ENCODE measurements at regions of chr2 and their contacts with region 1.

Region 1: DNA sequence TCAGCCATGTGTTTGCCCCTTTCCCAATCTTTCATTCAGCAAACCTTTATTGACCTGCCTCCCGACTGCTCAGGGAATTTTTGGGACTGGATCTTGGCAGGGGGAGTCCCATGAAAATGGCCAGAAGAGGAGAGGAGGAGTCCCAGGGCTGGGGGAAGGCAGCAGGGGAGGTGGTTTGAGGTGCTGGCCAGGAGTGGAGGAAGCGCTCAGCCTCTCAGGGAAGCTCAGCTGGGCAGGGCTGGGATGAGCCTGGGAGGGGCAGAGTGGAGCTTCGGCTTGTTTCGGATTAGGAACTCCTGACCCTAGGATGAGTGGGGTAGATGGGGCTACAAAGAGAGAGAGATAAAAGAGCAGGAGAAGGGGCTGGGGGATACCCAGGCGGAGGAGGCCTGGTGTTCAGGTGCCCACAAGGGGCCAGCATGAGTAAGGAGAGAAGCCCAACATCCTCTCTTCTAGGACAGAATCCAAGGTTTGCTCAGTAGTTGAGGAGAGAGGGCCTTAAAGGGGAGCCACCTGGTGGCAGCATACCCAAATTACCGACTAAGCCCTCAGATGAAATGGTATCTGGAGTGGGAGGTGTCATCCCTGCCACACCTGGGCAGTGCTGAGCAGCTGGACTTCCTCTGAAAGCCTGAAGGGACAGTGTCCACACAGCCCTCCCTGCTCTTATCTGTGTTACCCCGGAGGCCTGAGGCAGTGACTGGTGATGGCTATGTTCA is 91.1 kb downstream of the INHBB start:
- DNase-seq: peak; percentile 59
- ATAC-seq: peak; percentile 51
- H3K4me3 Mint-ChIP-seq: no peak overlapping the region
- H3K27ac Mint-ChIP-seq: no peak overlapping the region
- H3K4me1 Mint-ChIP-seq: no peaks in the 10 kb centered on the region
- H3K27me3 Mint-ChIP-seq: peaks cover 14% of the 10 kb centered on the region
- CTCF ChIP-seq: peak; percentile 33

Region 2: GRCh38 chr2:120343433-120344105 is 93.5 kb before region 1 on chr2:
- CTCF ChIA-PET with region 1: interaction called, 12 read pairs
- POLR2A ChIA-PET with region 1: no interaction called
- intact Hi-C with region 1: loop called (anchors 10 kb)
- DNase-seq: peak; percentile 74
- ATAC-seq: peak; percentile 76
- H3K4me3 Mint-ChIP-seq: no peak overlapping the region
- H3K27ac Mint-ChIP-seq: no peak overlapping the region
- H3K4me1 Mint-ChIP-seq: peaks cover 16% of the 10 kb centered on the region
- H3K27me3 Mint-ChIP-seq: peaks cover 52% of the 10 kb centered on the region
- CTCF ChIP-seq: peak; percentile 75

Region 3: DNA sequence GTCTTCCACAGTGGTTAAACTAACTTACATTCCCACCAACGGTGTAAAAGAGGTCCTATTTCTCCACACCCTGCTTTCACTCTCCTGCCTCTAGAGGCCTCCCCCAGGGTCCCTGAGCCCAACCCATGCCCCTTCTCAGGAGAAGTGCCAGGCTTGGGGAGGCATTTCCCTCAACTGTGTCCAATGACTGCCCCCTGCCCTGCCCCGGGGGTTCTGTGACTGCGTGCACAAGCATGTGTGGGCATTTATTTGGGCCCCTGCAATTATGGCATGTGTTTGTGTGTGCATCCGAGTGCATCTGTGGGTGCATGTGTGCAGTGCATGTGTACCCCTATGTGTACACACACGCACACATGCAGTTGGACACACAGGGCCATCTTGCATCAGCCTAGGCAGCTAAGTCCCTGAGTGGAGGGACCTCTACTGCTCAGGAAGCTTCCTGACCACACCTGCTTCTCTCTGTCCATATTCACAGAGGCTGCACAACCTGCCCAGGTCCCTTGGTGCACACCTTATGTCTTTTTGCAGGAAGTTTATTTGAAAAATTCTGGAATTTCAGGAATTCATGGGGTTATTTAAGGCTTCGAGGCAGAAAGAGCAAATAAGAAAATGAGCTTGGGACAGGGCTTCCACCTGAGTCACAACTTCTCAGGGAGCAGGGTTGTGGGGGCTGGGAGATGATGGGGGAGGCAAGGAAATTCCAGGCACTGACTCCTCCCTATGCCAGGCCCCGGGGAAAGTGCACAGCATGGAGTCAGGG is 33.6 kb before region 1 on chr2:
- CTCF ChIA-PET with region 1: no interaction called
- POLR2A ChIA-PET with region 1: no interaction called
- intact Hi-C with region 1: no loop called
- DNase-seq: no peak
- ATAC-seq: no peak
- H3K4me3 Mint-ChIP-seq: no peak overlapping the region
- H3K27ac Mint-ChIP-seq: no peak overlapping the region
- H3K4me1 Mint-ChIP-seq: no peaks in the 10 kb centered on the region
- H3K27me3 Mint-ChIP-seq: peaks cover 5% of the 10 kb centered on the region
- CTCF ChIP-seq: no peak

Region 4: GRCh38 chr2:120423177-120423943 is 13.7 kb before region 1 on chr2:
- CTCF ChIA-PET with region 1: no interaction called
- POLR2A ChIA-PET with region 1: no interaction called
- intact Hi-C with region 1: no loop called
- DNase-seq: no peak
- ATAC-seq: no peak
- H3K4me3 Mint-ChIP-seq: no peak overlapping the region
- H3K27ac Mint-ChIP-seq: no peak overlapping the region
- H3K4me1 Mint-ChIP-seq: no peaks in the 10 kb centered on the region
- H3K27me3 Mint-ChIP-seq: peaks cover 7% of the 10 kb centered on the region
- CTCF ChIP-seq: no peak

Region 5: DNA sequence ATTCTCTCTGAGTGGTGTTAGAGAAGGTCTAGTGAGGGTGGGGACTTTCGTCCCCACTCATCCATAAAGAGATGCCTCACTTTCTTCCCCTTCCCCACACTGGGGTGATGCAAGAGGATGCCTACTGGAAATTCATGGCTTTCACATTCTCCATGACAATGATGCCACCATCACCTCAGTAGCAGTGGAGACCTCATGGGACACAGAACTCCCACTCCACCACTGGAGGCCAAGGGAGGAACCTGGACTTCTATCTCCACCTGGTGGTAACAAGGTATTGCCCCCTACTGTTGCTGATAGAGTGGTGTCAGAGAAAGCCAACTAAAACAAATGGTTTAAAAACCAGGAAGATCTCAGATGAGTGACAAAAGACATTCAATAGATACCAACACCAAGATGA is 19.8 kb after region 1 on chr2:
- CTCF ChIA-PET with region 1: no interaction called
- POLR2A ChIA-PET with region 1: no interaction called
- intact Hi-C with region 1: no loop called
- DNase-seq: no peak
- ATAC-seq: no peak
- H3K4me3 Mint-ChIP-seq: no peak overlapping the region
- H3K27ac Mint-ChIP-seq: no peak overlapping the region
- H3K4me1 Mint-ChIP-seq: no peaks in the 10 kb centered on the region
- H3K27me3 Mint-ChIP-seq: peaks cover 2% of the 10 kb centered on the region
- CTCF ChIP-seq: no peak

Measured in activated CD8-positive, alpha-beta T cell treated with anti-CD3 and anti-CD28 coated beads for 36 hours (primary cell).